ENCODE measurements at regions of chr3 and their contacts with region 1.

Region 1: GRCh38 chr3:158659454-158660237 is 12.8 kb downstream of the LXN start:
- DNase-seq: no peak
- ATAC-seq: peak; percentile 81
- H3K4me3 ChIP-seq: no peak overlapping the region
- H3K27ac ChIP-seq: no peak overlapping the region
- H3K4me1 ChIP-seq: no peaks in the 10 kb centered on the region
- H3K27me3 ChIP-seq: no peaks in the 10 kb centered on the region

Region 2: DNA sequence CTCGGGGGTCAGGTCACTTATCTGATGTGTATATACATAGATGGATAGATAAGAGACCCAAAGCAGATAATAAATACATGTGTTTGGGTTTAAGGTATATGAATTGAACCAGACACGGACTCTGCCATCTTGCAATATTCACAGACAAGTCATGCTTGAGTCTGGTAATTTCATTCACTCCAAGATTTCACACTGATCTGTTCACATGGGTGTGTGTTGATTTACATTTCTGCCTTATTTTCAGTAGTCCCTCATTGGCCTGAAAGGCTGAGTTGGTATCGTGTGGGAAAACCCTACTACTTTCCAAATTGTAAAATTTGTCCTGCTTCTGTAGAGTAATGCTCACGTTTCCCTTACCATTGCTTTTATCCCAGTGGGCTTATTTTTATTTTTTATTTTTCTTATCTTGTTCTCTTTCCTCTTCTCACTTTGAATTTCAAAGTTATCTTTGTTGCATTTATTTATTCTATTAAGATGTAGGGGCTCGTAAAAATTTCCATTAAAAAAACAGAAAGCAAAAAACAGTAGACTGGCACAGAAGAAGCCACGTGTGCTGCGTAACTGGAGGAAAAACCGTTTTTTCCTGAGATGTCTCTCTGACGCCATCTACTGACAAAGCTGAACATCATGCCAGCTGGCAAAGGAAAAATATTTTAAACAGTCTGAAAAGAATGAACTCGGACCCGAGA is 131.4 kb after region 1 on chr3:
- intact Hi-C with region 1: loop called (anchors 5 kb)
- DNase-seq: no peak
- ATAC-seq: peak; percentile 83
- H3K4me3 ChIP-seq: peak overlapping the region in 1 of 2 donors; percentile 34
- H3K27ac ChIP-seq: no peak overlapping the region
- H3K4me1 ChIP-seq: no peaks in the 10 kb centered on the region
- H3K27me3 ChIP-seq: no peaks in the 10 kb centered on the region

Measured in aorta (tissue), 5 donors.